K562 (cell line): ENCODE measurements at regions of chr9 and their contacts with region 1.

Region 1: DNA sequence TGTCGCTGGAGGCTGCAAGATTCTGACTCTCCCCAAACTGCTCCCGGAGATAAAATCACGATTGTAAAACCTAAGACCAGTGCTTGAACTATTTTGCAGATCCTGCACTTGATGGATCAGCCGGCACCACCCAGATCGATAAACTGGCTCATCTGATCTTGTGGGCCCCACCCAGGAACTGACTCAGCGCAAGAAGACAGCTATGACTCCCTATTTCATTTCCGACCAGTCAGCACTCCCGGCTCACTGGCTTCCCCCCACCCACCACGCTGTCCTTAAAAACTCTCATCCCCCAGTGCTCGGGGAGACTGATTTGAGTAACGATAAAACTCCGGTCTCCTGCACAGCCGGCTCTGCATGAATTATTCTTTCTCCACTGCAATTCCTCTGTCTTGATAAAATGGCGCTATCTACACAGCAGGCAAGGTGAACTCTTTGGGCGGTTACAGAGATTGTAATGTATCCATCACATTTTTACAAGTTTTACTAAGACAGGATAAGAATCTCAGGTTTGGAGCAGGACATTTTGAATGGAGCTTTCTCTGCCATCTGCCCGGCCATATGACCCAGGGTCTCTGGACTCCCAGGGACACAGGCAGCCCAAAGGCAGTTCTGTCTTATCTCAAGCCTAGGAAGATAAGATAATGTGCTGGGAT is 10.6 kb upstream of the PPP1R26 start:
- DNase-seq: peak; percentile 51 to 90 (median 62)
- ATAC-seq: peak; percentile 88
- H3K4me3 ChIP-seq: peak overlapping the region; percentile 15
- H3K27ac ChIP-seq: peak overlapping the region; percentile 80
- H3K4me1 ChIP-seq: peaks cover 42 to 53% of the 10 kb centered on the region in 2 experiments
- H3K27me3 ChIP-seq: no peaks in the 10 kb centered on the region
- CTCF ChIP-seq: no peak
- EP300 ChIP-seq: peak; percentile 90
- POLR2A ChIP-seq: peak; percentile 44; the same call in 1 of the 2 replicates
- RAD21 ChIP-seq: no peak

Region 2: DNA sequence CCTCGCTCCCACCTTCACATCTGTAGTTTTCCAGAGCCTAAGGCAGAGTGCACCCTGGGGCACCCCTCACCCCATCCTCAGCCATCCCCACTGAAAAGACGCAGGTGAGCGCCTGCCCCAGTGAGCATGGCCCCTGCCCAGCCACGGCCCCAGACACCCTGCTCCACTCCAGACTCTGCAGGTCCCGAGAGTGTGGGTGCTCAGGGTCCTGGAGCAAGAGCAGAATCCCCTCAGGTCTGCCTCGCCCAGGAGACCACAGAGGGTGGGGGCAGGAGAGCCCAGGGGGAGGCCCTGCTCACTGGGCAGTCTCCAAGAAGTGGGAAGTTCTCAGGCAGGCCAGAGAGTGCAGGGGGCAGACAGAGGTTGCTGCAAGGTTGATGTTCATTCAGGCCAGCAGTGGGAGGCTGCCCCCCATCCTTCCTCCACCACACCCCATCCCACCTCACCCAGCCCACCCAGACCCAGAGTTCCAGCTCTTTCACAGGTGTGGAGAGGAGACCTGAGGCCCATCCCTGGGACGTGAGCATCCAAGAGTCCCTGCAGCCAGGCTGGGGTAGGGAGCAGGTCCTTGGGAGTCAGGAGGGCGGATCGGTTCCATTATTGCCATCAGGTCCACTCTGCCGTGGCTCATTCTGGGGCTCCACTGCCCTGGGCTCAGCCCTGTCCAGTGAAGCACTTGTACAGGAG is 147.9 kb before region 1 on chr9:
- CTCF ChIA-PET with region 1: no interaction called
- POLR2A ChIA-PET with region 1: no interaction called
- in situ Hi-C with region 1: no loop called
- intact Hi-C with region 1: no loop called
- DNase-seq: no peak
- ATAC-seq: no peak
- H3K4me3 ChIP-seq: no peak overlapping the region
- H3K27ac ChIP-seq: no peak overlapping the region
- H3K4me1 ChIP-seq: no peaks in the 10 kb centered on the region
- H3K27me3 ChIP-seq: peaks cover 0 to 16% of the 10 kb centered on the region in 2 experiments; a peak in 2 of 5 replicates
- CTCF ChIP-seq: no peak
- EP300 ChIP-seq: no peak
- POLR2A ChIP-seq: no peak
- RAD21 ChIP-seq: no peak

Region 3: DNA sequence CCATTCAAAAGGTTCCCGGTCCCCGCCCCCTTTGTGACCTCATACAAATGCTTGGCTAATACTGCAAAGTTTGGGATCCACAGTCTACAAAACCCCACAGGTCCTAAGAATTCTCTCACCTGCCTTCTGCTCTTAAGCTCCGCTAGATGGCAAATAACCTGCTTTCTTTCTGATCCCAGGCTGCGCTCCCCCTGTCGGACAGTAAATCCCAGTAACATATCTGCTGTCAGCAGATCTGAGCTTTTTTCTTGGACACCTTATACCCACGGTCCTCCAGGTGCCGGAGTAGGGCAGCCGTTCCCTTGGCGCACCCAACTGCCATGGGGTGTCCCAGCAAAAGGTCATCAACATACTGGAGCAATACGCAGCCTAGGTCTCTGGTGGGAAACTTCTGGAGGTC is 28.4 kb before region 1 on chr9:
- CTCF ChIA-PET with region 1: interaction called, 3 read pairs
- POLR2A ChIA-PET with region 1: interaction called, 3 read pairs
- in situ Hi-C with region 1: no loop called
- intact Hi-C with region 1: loop called (anchors 2 kb)
- DNase-seq: peak in 2 of 4 experiments; percentile 43 to 91
- ATAC-seq: peak; percentile 76
- H3K4me3 ChIP-seq: peak overlapping the region; percentile 18; the same call in 1 of the 2 replicates
- H3K27ac ChIP-seq: peak overlapping the region; percentile 83
- H3K4me1 ChIP-seq: peaks cover 18 to 32% of the 10 kb centered on the region in 2 experiments
- H3K27me3 ChIP-seq: no peaks in the 10 kb centered on the region
- CTCF ChIP-seq: peak; percentile 85 to 99 (median 99)
- EP300 ChIP-seq: peak; percentile 45; the same call in 1 of the 2 replicates
- POLR2A ChIP-seq: no peak
- RAD21 ChIP-seq: peak; percentile 63 to 80

Region 4: DNA sequence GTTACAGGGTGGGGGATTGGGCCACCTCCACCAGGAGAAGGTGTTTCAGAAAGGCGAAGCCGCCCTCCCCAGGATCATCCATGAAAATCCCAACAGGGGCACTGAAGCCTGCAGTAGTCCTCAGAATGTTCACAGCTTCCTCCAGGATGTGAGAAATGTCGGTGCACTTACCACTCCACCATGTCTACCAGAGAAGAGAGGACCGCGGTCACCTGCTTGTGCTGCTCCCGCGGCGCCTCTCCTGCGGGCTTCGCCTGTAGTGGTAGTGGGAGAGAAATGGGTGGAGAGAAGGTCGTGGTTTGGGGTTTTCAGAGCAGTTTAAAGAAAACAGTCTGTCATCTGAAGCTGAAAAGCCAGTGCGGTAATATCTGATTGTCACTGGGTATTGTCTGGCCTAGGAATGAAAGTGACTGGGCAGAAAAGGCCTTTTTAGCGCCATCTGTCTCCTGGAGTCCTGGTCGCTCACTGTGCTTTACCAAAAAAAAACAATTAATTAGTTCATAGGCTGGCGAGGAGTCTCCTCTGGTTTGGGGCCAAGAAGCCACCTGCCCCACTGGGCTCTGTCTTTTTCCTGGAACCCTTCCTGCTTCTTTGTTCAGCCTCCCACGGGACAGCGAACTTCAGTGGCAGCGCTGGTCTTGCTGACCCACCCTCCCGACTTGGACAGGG is 12.4 kb before region 1 on chr9:
- CTCF ChIA-PET with region 1: no interaction called
- POLR2A ChIA-PET with region 1: interaction called, 11 read pairs
- in situ Hi-C with region 1: no loop called
- intact Hi-C with region 1: no loop called
- DNase-seq: peak in 1 of 4 experiments; percentile 36
- ATAC-seq: peak; percentile 73
- H3K4me3 ChIP-seq: no peak overlapping the region
- H3K27ac ChIP-seq: peak overlapping the region; percentile 29; the same call in 1 of the 3 replicates
- H3K4me1 ChIP-seq: peaks cover 5 to 9% of the 10 kb centered on the region in 2 experiments; a peak in 2 of 5 replicates
- H3K27me3 ChIP-seq: no peaks in the 10 kb centered on the region
- CTCF ChIP-seq: peak in 2 of 3 experiments; percentile 33 to 39; a peak in 3 of 6 replicates
- EP300 ChIP-seq: no peak
- POLR2A ChIP-seq: no peak
- RAD21 ChIP-seq: 0 out of 4 replicates have a peak, but pooled peaks of 1 of the 2 experiments have one; percentile 14

Region 5: DNA sequence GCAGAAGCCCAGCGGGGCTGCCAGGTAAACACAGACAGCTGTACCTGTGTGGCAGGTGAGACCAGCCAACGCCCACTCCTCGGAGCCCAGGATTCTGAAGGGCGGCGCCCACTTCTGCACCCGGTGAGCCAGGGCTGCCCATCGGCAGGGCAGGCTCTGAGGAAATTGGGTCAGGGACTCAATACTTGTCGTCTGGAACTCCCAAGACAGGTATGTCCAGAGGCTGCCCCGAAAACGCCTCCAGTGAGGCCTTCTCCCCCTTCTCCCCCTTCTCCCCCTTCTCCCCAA is 150.5 kb after region 1 on chr9:
- CTCF ChIA-PET with region 1: no interaction called
- POLR2A ChIA-PET with region 1: no interaction called
- in situ Hi-C with region 1: no loop called
- intact Hi-C with region 1: no loop called
- DNase-seq: no peak
- ATAC-seq: no peak
- H3K4me3 ChIP-seq: no peak overlapping the region
- H3K27ac ChIP-seq: no peak overlapping the region
- H3K4me1 ChIP-seq: peaks cover 0 to 16% of the 10 kb centered on the region in 2 experiments; a peak in 2 of 5 replicates
- H3K27me3 ChIP-seq: peaks cover 27 to 73% of the 10 kb centered on the region in 2 experiments; a peak in 4 of 5 replicates
- CTCF ChIP-seq: no peak
- EP300 ChIP-seq: no peak
- POLR2A ChIP-seq: no peak
- RAD21 ChIP-seq: no peak